Endothelial cell of umbilical vein (primary cell): ENCODE measurements at regions of chr2 and their contacts with region 1.

Region 1: DNA sequence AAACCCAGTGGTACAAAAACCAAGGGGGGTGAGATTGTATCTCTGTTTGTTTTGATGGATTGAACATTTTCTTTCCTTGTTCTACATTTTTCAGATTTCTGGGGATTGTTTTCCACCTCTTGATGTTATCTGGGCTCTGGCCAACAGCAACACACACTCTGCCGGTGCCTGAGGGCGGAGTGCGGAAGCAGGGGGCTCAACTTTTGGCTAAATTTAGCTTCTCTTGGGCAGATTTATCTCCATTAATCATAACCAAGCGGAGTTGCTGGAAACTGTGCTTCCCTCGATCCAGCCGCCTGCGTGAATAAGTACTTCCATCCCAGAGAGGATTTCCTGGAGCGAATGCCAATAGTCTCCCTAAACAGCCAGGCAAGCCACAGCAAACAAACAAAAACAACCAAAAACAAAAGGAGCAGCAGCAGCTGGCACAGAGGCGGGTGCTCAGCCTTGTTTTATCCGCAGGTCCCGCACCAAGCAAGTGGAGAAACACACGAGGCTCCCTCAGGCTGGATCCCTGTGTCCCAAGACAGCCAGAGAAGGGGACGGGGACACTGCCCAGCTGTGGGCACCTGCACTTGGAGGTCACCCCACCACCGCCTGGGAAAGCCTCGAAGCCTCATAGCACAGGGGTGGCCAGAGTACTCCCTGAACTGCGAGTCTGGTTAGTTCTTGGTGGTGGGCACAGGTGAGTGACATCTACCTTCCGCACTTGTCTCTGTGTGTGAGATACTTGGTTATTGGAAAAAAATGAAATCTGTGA is 143.4 kb downstream of the NDUFA10 start:
- DNase-seq: peak; percentile 75
- H3K4me3 ChIP-seq: no peak overlapping the region
- H3K27ac ChIP-seq: peak overlapping the region; percentile 72
- H3K4me1 ChIP-seq: peaks cover 17% of the 10 kb centered on the region
- H3K27me3 ChIP-seq: no peaks in the 10 kb centered on the region
- CTCF ChIP-seq: no peak
- POLR2A ChIP-seq: no peak

Region 2: GRCh38 chr2:239143858-239144718 is 737.7 kb before region 1 on chr2:
- CTCF ChIA-PET with region 1: no interaction called
- POLR2A ChIA-PET with region 1: no interaction called
- dilution Hi-C with region 1: no loop called
- intact Hi-C with region 1: loop called (anchors 1 kb)
- DNase-seq: peak; percentile 37
- H3K4me3 ChIP-seq: no peak overlapping the region
- H3K27ac ChIP-seq: no peak overlapping the region
- H3K4me1 ChIP-seq: no peaks in the 10 kb centered on the region
- H3K27me3 ChIP-seq: no peaks in the 10 kb centered on the region
- CTCF ChIP-seq: peak; percentile 59 to 72
- POLR2A ChIP-seq: no peak

Region 3: GRCh38 chr2:239288951-239289511 is 592.7 kb before region 1 on chr2:
- CTCF ChIA-PET with region 1: no interaction called
- POLR2A ChIA-PET with region 1: no interaction called
- dilution Hi-C with region 1: no loop called
- intact Hi-C with region 1: no loop called
- DNase-seq: no peak
- H3K4me3 ChIP-seq: no peak overlapping the region
- H3K27ac ChIP-seq: no peak overlapping the region
- H3K4me1 ChIP-seq: no peaks in the 10 kb centered on the region
- H3K27me3 ChIP-seq: no peaks in the 10 kb centered on the region
- CTCF ChIP-seq: no peak
- POLR2A ChIP-seq: no peak

Region 4: GRCh38 chr2:239380831-239381708 is 500.7 kb before region 1 on chr2:
- CTCF ChIA-PET with region 1: no interaction called
- POLR2A ChIA-PET with region 1: no interaction called
- dilution Hi-C with region 1: no loop called
- intact Hi-C with region 1: loop called (anchors 1 kb)
- DNase-seq: peak; percentile 80
- H3K4me3 ChIP-seq: peak overlapping the region in 2 of 3 experiments; percentile 27 to 31
- H3K27ac ChIP-seq: peak overlapping the region; percentile 19
- H3K4me1 ChIP-seq: peaks cover 15% of the 10 kb centered on the region
- H3K27me3 ChIP-seq: no peaks in the 10 kb centered on the region
- CTCF ChIP-seq: no peak
- POLR2A ChIP-seq: no peak

Region 5: GRCh38 chr2:239858179-239858578 is 23.6 kb before region 1 on chr2:
- CTCF ChIA-PET with region 1: no interaction called
- POLR2A ChIA-PET with region 1: no interaction called
- dilution Hi-C with region 1: no loop called
- intact Hi-C with region 1: loop called (anchors 1 kb)
- DNase-seq: peak; percentile 45
- H3K4me3 ChIP-seq: no peak overlapping the region
- H3K27ac ChIP-seq: peak overlapping the region; percentile 52
- H3K4me1 ChIP-seq: peaks cover 6% of the 10 kb centered on the region
- H3K27me3 ChIP-seq: no peaks in the 10 kb centered on the region
- CTCF ChIP-seq: no peak
- POLR2A ChIP-seq: no peak

Region 6: DNA sequence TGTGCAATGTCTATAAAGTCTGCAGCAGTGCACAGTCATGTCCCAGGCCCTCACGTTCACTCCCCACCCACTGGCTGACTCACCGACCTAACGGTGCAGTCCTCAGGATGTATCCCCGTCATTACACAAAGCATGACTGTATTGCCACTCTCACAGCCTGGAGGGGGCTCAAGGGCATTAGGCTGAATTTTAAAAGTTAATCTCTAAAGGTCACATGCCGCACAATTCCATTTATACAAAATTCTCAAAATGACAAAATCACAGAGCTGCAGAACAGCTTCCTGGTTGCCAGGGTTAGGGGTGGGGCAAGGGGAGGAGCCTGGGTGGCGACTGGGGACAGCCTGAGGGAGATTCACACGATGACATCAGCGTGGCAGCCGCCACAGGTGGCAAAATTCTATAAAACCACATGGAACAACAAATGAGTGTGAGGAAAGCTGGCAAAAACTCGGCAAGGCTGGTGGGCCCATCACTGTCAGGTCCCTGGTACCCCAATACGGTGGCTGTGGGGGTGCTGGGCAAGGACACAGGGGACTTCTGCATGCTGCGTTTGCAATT is 45.8 kb after region 1 on chr2:
- CTCF ChIA-PET with region 1: no interaction called
- POLR2A ChIA-PET with region 1: no interaction called
- dilution Hi-C with region 1: no loop called
- intact Hi-C with region 1: loop called (anchors 1 kb)
- DNase-seq: peak; percentile 17
- H3K4me3 ChIP-seq: no peak overlapping the region
- H3K27ac ChIP-seq: no peak overlapping the region
- H3K4me1 ChIP-seq: no peaks in the 10 kb centered on the region
- H3K27me3 ChIP-seq: no peaks in the 10 kb centered on the region
- CTCF ChIP-seq: no peak
- POLR2A ChIP-seq: no peak